CD8-positive, alpha-beta memory T cell (primary cell): ENCODE measurements at regions of chr2 and their contacts with region 1.

Region 1: GRCh38 chr2:130332271-130333073 is 10.2 kb upstream of the IMP4 start:
- DNase-seq: peak; percentile 52 to 77 (median 57)
- H3K4me3 ChIP-seq: no peak overlapping the region
- H3K4me3 Mint-ChIP-seq: peak overlapping the region in 5 of 7 donors; percentile 2 to 64 (median 50)
- H3K27ac ChIP-seq: no peak overlapping the region
- H3K27ac Mint-ChIP-seq: peak overlapping the region in 3 of 8 donors; percentile 10 to 64 (median 18)
- H3K4me1 ChIP-seq: peaks cover 4% of the 10 kb centered on the region
- H3K4me1 Mint-ChIP-seq: peaks cover 5 to 7% (median 6%) of the 10 kb centered on the region in 3 donors
- H3K27me3 ChIP-seq: no peaks in the 10 kb centered on the region
- H3K27me3 Mint-ChIP-seq: peaks cover 18 to 37% of the 10 kb centered on the region in 2 donors

Region 2: DNA sequence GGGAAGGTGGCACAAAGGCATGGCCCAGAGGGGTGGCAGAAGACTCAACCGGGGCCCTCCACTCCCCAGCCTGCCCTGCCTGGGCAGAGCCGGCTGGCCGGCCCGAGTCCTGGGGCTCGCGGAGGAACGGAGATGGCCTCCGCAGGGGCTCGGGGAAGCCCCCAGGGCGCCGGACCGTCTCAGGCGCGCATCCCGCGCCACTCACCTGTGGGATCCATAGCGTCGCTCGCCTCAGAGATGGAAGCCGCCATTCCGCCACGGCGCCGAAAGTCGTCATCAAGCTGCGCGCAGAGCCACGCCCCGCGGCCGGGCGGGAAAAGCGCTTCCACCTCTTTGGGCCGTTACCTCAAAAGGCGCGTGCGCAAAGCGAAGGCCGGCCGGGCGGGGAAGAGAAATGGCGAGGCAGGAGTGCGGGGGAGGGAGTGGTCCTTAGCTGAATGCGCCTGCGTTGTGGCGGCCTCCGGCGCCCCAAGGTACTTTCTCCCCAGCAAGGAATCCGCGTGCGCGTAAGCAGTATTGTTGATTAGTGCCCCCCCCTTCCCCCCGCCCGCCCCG is 151.1 kb before region 1 on chr2 and contains the start of gene SMPD4:
- CTCF ChIA-PET with region 1: interaction called, 11 read pairs
- POLR2A ChIA-PET with region 1: interaction called, 3 read pairs
- DNase-seq: peak; percentile 97 to 99 (median 98)
- H3K4me3 ChIP-seq: peak within 1 kb of the TSS; percentile 94
- H3K4me3 Mint-ChIP-seq: peak within 1 kb of the TSS; percentile 89 to 97 (median 91)
- H3K27ac ChIP-seq: peak within 1 kb of the TSS; percentile 90
- H3K27ac Mint-ChIP-seq: peak within 1 kb of the TSS; percentile 93 to 98 (median 95)
- H3K4me1 ChIP-seq: peaks cover 23% of the 10 kb centered on the region
- H3K4me1 Mint-ChIP-seq: peaks cover 18 to 44% (median 25%) of the 10 kb centered on the region in 3 donors
- H3K27me3 ChIP-seq: no peaks in the 10 kb centered on the region
- H3K27me3 Mint-ChIP-seq: peaks cover 0 to 4% of the 10 kb centered on the region in 2 donors
- total RNA-seq, gene SMPD4: 111 to 113 TPM